ENCODE measurements at regions of chr20 and their contacts with region 1.

Region 1: DNA sequence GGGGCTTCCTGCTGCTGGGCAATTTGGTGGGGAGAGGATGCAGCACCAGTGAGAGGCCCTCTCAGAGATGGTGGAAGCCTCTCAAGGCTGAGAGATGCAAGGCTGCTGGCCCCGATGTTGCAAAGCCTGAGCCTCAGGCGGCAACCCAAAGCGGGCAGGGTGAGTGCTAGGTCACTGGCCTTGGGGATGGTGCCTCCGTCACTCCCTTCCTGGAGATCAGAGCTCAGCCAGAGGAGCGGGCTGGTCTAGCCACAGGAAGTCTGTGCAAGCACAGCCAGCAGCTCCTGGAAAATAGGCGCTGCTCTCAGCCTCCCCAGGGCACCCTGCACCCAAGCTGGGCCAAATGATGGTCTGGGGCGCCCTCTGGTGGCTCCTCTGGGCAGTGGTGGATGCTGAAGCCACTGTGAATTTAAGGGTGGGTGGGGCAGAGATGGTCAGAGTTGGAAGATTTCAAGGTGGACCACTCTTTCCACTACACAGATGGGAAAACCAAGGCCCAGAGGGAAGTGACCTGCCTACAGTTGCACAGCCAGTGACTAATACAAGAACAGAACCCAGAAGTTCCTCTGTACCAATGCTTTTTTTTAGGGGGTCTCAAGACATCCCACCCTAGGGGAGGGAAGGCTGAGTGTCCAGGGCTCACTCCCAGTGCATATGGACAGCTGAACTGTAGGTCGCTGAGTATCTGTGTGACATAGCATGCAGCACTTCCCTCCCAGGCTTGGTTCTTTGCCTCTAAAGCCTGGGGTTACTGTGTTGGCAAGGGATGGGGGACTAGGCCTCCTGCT is 20.8 kb downstream of the C20orf203 start:
- DNase-seq: peak; percentile 86 to 92 (median 90)
- ATAC-seq: peak; percentile 95 to 98 (median 98)
- H3K4me3 ChIP-seq: no peak overlapping the region
- H3K27ac ChIP-seq: no peak overlapping the region
- H3K4me1 ChIP-seq: peaks cover 0 to 12% (median 0%) of the 10 kb centered on the region in 4 donors
- H3K27me3 ChIP-seq: no peaks in the 10 kb centered on the region
- CTCF ChIP-seq: peak; percentile 91 to 99 (median 96)
- POLR2A ChIP-seq: no peak

Region 2: DNA sequence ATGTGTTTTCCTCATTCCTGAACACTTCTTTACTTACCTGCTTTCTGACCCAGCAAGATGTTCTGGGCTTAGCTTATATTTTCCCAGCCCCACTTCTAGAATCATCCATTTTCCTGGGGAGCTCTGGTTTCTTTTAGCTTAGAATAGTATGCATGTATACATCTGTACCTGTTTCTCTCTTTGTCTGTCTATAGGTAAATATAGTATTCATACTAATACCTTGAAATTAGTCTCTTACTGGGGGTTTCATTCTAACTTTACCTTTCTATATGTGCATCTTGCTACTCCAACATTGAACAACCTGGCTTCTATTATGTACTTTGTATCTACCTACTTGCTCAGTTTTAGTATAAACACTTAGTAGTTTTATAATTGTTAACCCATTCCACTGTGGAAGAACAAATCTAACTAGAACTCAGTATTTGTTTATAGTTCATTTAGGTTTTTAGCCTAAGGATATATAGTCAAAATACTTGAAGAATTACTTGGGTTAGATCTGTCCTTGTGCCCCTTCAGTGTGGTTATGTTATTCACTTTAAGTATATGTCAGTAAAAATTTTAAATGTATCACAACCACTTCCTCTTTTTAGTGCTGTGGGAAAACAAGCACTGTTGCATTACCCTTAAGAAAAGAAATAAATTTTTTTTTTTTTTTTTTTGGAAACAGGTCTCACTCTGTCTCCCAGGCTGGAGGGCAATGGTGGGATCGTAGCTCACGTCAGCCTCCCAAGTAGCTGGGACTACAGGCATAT is 240.8 kb before region 1 on chr20:
- intact Hi-C with region 1: no loop called
- DNase-seq: no peak
- ATAC-seq: no peak
- H3K4me3 ChIP-seq: no peak overlapping the region
- H3K27ac ChIP-seq: no peak overlapping the region
- H3K4me1 ChIP-seq: no peaks in the 10 kb centered on the region
- H3K27me3 ChIP-seq: no peaks in the 10 kb centered on the region
- CTCF ChIP-seq: no peak
- POLR2A ChIP-seq: no peak

Region 3: GRCh38 chr20:32516583-32517517 is 136.1 kb before region 1 on chr20:
- intact Hi-C with region 1: loop called (anchors 5 kb)
- DNase-seq: no peak
- ATAC-seq: peak in 3 of 4 donors; percentile 2 to 10 (median 10)
- H3K4me3 ChIP-seq: no peak overlapping the region
- H3K27ac ChIP-seq: no peak overlapping the region
- H3K4me1 ChIP-seq: peaks cover 0 to 37% (median 2%) of the 10 kb centered on the region in 4 donors
- H3K27me3 ChIP-seq: no peaks in the 10 kb centered on the region
- CTCF ChIP-seq: no peak
- POLR2A ChIP-seq: no peak

Region 4: DNA sequence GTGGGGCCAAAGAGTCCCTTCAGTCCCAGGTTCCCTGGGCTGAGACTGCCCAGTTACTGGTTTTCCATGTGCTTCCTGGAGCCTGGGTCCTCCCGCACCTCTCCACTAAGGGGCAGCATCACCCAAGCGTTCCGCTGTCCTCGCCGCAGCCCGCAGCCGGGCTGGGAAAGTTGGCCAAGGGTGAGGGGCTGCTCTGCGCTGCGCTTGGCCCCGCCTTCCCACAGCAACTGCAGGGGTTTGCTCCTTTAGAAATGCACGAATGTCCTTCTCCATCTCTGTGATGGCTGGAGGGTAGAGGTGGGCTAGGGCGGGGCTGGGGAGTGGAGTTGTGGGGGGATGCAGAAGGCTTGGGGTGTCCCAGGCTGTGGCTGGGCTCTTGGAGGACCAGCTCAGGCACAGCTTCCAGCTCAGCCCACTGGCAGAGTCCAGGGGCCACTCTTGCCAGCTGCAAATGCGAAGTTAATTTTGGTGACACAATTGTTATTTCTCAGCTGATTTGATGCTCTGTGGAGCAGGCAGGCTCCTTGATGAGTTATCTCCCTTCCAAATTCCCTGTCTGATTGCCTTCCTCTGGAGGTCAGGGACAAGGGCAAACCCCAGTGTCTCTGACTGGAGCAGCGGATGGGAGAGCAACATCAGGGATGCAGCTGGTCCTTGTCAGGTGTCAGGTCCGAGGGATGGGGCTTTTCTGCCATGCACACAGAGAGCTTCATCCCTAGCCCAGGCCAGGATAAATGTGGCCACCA is 131.0 kb before region 1 on chr20:
- intact Hi-C with region 1: loop called (anchors 5 kb)
- DNase-seq: peak; percentile 69 to 74 (median 71)
- ATAC-seq: peak; percentile 78 to 83 (median 82)
- H3K4me3 ChIP-seq: no peak overlapping the region
- H3K27ac ChIP-seq: no peak overlapping the region
- H3K4me1 ChIP-seq: peaks cover 0 to 17% (median 3%) of the 10 kb centered on the region in 4 donors
- H3K27me3 ChIP-seq: no peaks in the 10 kb centered on the region
- CTCF ChIP-seq: peak; percentile 81 to 92 (median 85)
- POLR2A ChIP-seq: no peak

Region 5: DNA sequence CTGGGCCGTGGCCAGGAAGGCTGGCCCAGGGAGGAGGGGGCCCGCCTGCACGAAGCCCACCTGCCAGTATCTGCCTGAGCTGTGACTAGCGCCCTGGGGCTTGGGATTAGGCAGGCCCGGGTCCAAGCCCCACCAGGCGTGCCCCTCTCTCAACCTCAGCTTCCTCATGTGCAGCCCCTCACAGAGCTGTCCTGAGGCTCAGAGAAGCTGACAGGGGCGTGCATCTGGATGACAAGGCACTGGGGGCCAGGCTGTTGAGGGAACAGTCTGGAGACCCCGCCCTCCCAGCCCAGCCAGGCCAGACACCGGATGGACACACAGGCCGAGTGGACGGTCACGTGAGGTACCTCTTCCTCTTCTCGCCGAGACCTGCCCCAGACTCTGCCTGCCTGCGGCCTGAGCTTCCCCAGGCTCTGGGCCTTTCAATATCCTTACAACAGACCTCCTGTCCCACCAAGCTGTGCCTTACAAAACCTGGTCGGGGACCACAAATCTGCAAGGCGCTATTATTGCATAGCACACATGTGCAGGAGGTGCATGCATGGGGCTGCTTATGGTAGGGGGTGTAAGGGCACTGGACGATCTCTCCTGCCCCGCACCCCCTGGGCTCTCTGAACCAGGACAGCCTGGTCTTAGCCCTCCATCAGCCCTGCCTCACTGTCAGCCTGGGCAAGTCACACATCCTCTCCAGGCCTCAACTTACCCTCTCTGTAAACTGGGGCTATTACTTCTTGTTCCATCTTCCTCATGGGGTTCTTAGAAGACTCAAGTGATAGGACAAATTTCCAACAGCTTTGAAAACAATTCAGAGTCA is 87.8 kb before region 1 on chr20:
- intact Hi-C with region 1: no loop called
- DNase-seq: peak; percentile 64 to 72 (median 65)
- ATAC-seq: peak; percentile 71 to 85 (median 78)
- H3K4me3 ChIP-seq: no peak overlapping the region
- H3K27ac ChIP-seq: no peak overlapping the region
- H3K4me1 ChIP-seq: no peaks in the 10 kb centered on the region
- H3K27me3 ChIP-seq: no peaks in the 10 kb centered on the region
- CTCF ChIP-seq: no peak
- POLR2A ChIP-seq: no peak

Measured in right lobe of liver (tissue), 6 donors.